Activated CD4-positive, alpha-beta T cell treated with anti-CD3 and anti-CD28 coated beads, Interleukin-2, amount 10 ng/mL, durations not matched to agents 24 days and 14 days (primary cell): ENCODE measurements at regions of chr6 and their contacts with region 1.

Region 1: GRCh38 chr6:98834060-98835031 is at the start of gene POU3F2:
- DNase-seq: peak; percentile 84
- H3K4me3 Mint-ChIP-seq: peak within 1 kb of the TSS; percentile 81
- H3K27ac Mint-ChIP-seq: peak within 1 kb of the TSS; percentile 67
- H3K4me1 Mint-ChIP-seq: peaks cover 29% of the 10 kb centered on the region
- H3K27me3 Mint-ChIP-seq: peaks cover 78% of the 10 kb centered on the region
- total RNA-seq, gene POU3F2: not detected in 2 replicates

Region 2: GRCh38 chr6:99349171-99350141 is 515.1 kb after region 1 on chr6 and contains the start of gene FAXC:
- intact Hi-C with region 1: loop called (anchors 10 kb)
- DNase-seq: peak; percentile 69
- H3K4me3 Mint-ChIP-seq: peak within 1 kb of the TSS; percentile 54
- H3K27ac Mint-ChIP-seq: no peak within 1 kb of the TSS
- H3K4me1 Mint-ChIP-seq: no peaks in the 10 kb centered on the region
- H3K27me3 Mint-ChIP-seq: peaks cover 59% of the 10 kb centered on the region
- total RNA-seq, gene FAXC: not detected in 2 replicates

Region 3: GRCh38 chr6:99613409-99613704 is 779.0 kb after region 1 on chr6:
- intact Hi-C with region 1: loop called (anchors 2 kb)
- DNase-seq: peak; percentile 76
- H3K4me3 Mint-ChIP-seq: peak overlapping the region; percentile 55
- H3K27ac Mint-ChIP-seq: no peak overlapping the region
- H3K4me1 Mint-ChIP-seq: peaks cover 29% of the 10 kb centered on the region
- H3K27me3 Mint-ChIP-seq: peaks cover 75% of the 10 kb centered on the region

Region 4: DNA sequence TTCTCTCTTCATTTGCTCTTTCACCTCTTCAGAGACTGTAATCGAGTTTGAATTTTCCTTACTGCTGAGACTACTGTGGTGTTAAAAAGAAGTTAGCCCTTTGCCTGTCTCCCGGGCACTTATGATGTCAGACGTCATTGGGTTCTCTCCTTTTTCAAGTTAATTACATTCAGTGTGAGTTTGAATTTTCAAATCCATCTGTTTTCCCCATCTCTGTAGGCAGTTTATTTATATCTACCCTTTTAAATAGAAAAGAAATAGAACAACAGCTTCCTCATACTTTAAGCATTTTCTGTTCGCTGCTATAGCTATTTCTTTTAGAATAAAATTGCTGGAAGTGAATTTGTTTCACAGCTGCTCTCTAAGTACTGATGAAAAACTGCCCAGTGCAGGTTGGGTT is 1078.3 kb after region 1 on chr6:
- intact Hi-C with region 1: no loop called
- DNase-seq: no peak
- H3K4me3 Mint-ChIP-seq: no peak overlapping the region
- H3K27ac Mint-ChIP-seq: no peak overlapping the region
- H3K4me1 Mint-ChIP-seq: no peaks in the 10 kb centered on the region
- H3K27me3 Mint-ChIP-seq: no peaks in the 10 kb centered on the region